ENCODE measurements at regions of chr11 and their contacts with region 1.

Region 1: GRCh38 chr11:65625628-65626342 is 10.2 kb downstream of the PCNX3 start:
- DNase-seq: peak in 8 of 10 donors; percentile 63 to 96 (median 76)

Region 2: DNA sequence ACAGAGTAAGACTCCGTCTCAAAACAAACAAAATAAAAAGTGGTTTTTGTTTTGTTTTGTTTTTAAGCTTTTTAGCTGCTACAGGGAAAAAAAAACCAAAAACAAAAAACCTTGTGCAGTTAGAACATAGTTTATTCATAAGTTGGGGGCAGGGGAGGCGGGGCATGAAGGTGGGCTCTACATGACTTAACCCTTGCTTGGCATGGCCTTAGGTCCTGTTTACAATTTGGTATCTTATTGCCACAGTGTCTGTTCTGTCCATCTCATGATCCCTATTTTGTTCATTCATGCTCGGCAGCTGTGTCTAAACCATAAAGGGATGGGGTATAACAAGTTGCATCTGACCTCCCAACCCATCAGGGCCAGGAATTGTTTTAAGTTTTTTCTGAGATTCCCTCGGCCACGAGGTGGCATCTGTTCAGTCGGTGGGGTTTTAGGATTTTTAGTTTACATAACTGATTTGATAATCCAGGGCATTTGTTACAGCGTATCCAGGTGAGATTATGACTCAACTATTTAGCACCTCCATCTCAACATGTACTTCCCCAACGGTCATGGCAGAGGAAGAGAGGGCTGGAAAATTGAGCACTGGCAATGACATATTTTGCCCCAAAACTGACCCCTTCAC is 148.1 kb after region 1 on chr11:
- intact Hi-C with region 1: loop called (anchors 1 kb)
- DNase-seq: no peak

Measured in posterior cingulate gyrus (tissue), 11 donors.